ENCODE measurements at regions of chr11 and their contacts with region 1.

Region 1: GRCh38 chr11:26753723-26754504 is 32.1 kb upstream of the SLC5A12 start:
- DNase-seq: no peak
- H3K4me3 ChIP-seq: no peak overlapping the region
- H3K27ac ChIP-seq: no peak overlapping the region
- H3K4me1 ChIP-seq: no peaks in the 10 kb centered on the region
- H3K27me3 ChIP-seq: no peaks in the 10 kb centered on the region
- CTCF ChIP-seq: peak; percentile 67 to 70 (median 67)

Region 2: DNA sequence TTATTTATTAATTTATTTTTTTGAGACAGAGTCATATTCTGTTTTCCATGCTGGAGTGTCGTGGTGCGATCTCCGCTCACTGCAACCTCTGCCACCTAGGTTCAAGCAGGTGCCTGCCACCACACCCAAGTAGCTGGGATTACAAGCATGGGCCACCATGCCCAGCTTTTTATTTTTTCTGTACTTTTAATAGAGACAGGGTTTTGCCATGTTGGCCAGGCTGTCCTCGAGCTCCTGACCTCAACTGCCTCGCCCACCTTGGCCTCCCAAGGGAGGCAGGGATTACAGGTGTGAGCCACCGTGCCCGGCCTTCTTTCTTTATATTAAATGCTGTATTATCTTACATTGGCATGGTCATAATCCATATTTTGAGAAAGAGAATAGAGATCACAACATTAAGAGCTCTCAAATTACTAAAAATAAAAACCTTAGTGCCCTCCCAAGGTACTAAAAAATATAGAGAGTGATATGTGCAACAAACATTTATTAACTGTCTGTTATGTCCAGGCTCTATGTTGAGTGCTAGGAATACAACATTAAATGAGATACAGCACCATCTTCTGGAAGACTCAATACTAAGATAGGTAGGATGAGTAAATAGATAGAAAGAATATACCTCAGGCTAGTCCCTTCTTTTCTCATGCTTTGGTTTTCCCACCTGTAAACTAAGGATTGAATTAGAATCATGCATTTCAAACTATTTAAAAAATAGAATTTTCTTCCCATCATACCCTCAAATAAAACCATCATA is 370.8 kb after region 1 on chr11:
- dilution Hi-C with region 1: loop called (anchors 25 kb)
- DNase-seq: no peak
- H3K4me3 ChIP-seq: no peak overlapping the region
- H3K27ac ChIP-seq: no peak overlapping the region
- H3K4me1 ChIP-seq: no peaks in the 10 kb centered on the region
- H3K27me3 ChIP-seq: no peaks in the 10 kb centered on the region
- CTCF ChIP-seq: peak in 1 of 3 experiments; percentile 18

Measured in keratinocyte (primary cell).